Activated CD8-positive, alpha-beta T cell treated with anti-CD3 and anti-CD28 coated beads for 36 hours (primary cell): ENCODE measurements at regions of chr2 and their contacts with region 1.

Region 1: DNA sequence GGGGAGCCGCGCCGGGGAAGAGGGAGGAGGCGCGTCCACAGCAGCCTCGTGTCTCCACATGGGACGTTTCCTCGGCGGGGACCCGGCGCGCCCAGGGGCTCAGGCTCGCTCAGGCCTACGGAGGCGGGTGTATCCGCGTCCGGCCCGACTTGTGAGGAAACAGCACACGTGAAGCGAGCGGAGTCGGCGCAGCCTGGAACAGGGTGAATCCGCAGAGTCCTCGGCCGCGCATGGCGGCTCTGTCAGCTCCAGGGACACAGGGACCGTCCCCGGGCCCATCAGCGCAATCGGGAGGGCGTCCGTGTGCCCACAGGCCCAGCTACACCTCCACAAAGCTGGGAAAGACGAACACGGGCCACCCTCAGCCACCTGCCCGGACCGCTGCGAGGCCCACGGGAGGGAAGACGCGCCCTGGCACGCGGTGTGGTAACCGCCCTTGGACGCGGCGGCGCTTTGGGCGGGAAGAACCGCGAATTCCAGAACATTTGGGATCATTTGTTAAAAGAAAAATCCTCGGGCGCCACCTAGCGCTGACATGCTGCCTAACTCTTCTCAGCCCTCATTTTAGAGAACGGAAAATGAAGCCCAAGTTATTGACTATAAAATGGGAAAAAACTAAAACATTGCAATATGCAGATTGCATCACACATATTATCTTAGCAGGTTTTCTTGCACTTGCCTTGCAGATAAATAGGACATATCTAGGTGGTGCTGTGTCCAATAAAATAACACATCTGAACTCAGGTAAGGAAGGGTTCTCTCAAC is 40.4 kb downstream of the TMEM18 start:
- DNase-seq: peak; percentile 70
- ATAC-seq: peak; percentile 83
- H3K4me3 Mint-ChIP-seq: peak overlapping the region; percentile 60
- H3K27ac Mint-ChIP-seq: peak overlapping the region; percentile 63
- H3K4me1 Mint-ChIP-seq: peaks cover 2% of the 10 kb centered on the region
- H3K27me3 Mint-ChIP-seq: no peaks in the 10 kb centered on the region
- CTCF ChIP-seq: peak; percentile 97

Region 2: GRCh38 chr2:348361-348916 is 288.4 kb before region 1 on chr2:
- CTCF ChIA-PET with region 1: no interaction called
- POLR2A ChIA-PET with region 1: no interaction called
- intact Hi-C with region 1: no loop called
- DNase-seq: no peak
- ATAC-seq: no peak
- H3K4me3 Mint-ChIP-seq: no peak overlapping the region
- H3K27ac Mint-ChIP-seq: no peak overlapping the region
- H3K4me1 Mint-ChIP-seq: peaks cover under 1% of the 10 kb centered on the region
- H3K27me3 Mint-ChIP-seq: peaks cover 14% of the 10 kb centered on the region
- CTCF ChIP-seq: no peak

Region 3: DNA sequence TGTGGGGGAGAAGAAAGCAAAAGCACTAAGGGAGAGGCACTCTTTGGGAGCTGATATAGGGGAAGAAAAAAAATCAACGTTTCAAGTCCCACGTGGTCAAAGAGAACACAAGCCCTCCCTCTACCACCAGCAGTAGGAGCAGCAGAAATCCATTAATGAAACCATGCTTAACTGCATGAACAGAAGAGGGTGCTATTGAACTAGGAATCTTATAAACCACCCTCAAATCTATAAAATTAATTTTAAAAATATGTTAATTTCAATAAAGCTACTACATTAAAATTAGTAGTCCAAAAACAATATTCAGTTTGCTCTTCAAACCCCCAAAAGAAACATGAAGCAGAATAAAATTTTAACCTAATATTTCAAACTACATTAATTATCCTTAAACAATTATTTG is 107.4 kb before region 1 on chr2:
- CTCF ChIA-PET with region 1: interaction called, 18 read pairs
- POLR2A ChIA-PET with region 1: no interaction called
- intact Hi-C with region 1: loop called (anchors 5 kb)
- DNase-seq: peak; percentile 22
- ATAC-seq: peak; percentile 65
- H3K4me3 Mint-ChIP-seq: no peak overlapping the region
- H3K27ac Mint-ChIP-seq: no peak overlapping the region
- H3K4me1 Mint-ChIP-seq: peaks cover 2% of the 10 kb centered on the region
- H3K27me3 Mint-ChIP-seq: peaks cover 2% of the 10 kb centered on the region
- CTCF ChIP-seq: peak; percentile 63